Body of pancreas (tissue), 4 donors: ENCODE measurements at regions of chr5 and their contacts with region 1.

Region 1: DNA sequence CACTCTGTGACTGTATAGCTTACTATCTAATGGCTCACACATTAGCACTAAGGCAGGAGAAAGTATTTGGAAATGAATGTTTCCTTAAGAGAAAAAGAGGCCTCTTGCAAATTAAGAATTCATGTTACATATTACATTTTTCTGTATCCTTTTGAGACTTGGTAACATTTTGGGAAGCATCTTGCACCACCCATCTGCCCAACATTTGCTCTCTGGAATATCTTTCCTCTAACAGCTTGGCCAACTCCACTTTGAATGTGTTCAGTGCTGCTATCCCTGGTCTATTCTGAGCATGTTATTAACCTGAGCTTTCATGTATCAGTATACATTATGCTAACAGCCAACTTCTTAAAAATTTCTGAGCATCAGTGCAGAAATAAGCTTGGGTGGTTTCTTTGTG is 27.2 kb downstream of the MFAP3 start:
- DNase-seq: no peak
- ATAC-seq: no peak
- H3K4me3 ChIP-seq: no peak overlapping the region
- H3K27ac ChIP-seq: no peak overlapping the region
- H3K4me1 ChIP-seq: no peaks in the 10 kb centered on the region
- H3K27me3 ChIP-seq: no peaks in the 10 kb centered on the region
- CTCF ChIP-seq: no peak
- POLR2A ChIP-seq: no peak

Region 2: DNA sequence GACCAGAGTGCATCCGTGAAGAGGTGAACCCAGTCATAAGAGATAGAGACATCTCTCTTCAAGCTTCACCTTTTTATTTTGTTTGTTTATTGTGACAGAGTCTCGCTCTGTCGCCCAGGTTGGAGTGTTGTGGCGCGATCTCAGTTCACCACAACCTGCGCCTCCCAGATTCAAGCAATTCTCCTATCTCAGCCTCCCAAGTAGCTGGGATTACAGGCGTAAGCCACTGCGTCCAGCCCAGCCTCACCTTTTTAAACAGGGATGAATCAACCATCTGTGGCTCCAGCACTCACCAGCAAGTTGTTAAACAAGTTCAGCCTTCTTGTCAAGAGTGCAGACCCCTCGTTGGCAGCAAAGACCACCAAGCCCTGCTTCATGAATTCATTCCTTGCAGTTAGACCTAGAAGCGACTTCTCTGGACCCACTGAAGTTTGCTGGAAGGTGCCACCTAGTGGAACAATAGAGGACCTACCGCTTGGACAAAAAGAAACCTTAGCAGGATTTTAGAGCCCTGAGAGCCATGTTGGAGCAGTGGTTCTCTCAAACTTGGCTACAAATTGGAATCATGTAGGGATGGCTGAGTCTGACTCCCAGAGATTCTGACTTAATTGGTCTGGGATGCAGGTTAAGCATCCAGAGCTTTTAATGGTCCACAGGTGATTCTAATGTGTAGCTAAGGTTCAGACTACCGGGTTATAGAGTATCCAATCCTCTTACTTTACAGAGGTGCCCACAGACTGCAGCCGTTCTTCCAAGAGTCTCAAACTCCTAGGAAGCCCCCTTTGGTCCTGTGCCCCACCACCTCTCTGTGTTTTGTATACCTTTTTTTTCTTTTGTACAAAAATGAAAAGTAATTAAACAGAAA is 114.1 kb after region 1 on chr5:
- intact Hi-C with region 1: loop called (anchors 5 kb)
- DNase-seq: peak; percentile 30 to 61 (median 50)
- ATAC-seq: peak; percentile 80
- H3K4me3 ChIP-seq: no peak overlapping the region
- H3K27ac ChIP-seq: no peak overlapping the region
- H3K4me1 ChIP-seq: no peaks in the 10 kb centered on the region
- H3K27me3 ChIP-seq: no peaks in the 10 kb centered on the region
- CTCF ChIP-seq: peak; percentile 36 to 85 (median 72)
- POLR2A ChIP-seq: no peak